ENCODE measurements at regions of chr5 and their contacts with region 1.

Region 1: DNA sequence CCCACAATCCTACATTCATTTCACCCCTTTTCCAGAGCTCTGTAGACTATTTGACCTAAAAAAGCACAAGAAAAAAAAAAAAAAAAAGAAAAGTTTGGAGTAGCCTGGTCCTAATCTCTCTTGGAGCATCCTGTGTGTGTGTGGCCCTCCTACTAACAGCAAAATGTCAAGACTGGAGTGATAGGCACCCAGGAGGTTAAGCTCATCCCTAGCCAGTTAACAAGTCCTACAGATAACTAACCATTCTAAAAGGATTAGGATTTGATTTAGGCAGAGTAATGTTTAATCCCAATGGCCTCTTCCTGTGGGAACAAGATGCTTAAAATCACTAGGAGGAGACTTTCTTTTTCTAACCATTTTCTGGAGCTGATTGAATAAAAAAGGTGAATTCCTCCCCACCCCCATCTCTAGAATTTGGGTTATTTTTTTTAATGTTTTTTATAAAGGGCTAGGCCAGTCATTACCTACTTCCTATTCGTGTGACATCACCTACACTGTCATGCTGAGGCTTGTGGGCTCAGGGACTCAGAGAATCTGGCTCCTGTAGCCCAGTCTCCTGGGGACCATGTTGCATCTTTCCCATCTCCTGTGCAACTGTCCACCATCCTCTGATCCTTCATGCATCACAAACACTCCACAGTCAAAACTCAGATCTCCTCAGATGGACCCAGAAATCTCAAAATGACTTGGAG is 43.2 kb upstream of the NR3C1 start:
- DNase-seq: peak; percentile 37
- H3K4me3 ChIP-seq: no peak overlapping the region
- H3K27ac ChIP-seq: peak overlapping the region; percentile 38
- H3K4me1 ChIP-seq: peaks cover 17% of the 10 kb centered on the region
- H3K27me3 ChIP-seq: no peaks in the 10 kb centered on the region
- CTCF ChIP-seq: no peak

Region 2: DNA sequence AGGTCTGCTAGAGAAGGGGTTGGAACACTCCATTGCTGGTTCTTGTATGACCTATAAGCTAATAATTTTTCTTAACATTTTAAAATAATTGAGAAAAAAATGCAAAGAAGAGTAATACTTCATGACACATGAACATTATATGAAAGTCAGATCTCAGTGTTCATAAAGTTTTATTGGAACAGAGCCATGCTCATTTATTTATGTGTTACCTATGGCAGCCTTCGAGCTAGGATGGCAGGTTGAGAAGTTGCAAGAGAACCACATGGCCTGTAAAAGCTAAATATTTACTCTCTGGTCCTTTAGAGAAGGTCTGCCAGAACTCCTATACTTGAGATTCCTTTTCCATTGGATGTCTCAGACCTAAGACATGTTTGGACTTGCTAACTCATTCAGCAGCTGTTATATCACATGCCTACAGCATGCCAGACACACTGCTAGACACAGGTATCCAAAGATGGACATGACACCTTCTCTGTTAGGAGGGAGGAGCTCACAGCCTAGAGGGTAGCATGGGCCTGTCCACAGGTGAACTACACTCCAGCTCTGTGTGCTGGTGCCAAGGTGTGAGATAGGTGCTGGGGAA is 372.2 kb before region 1 on chr5:
- CTCF ChIA-PET with region 1: no interaction called
- POLR2A ChIA-PET with region 1: no interaction called
- intact Hi-C with region 1: no loop called
- DNase-seq: no peak
- H3K4me3 ChIP-seq: no peak overlapping the region
- H3K27ac ChIP-seq: no peak overlapping the region
- H3K4me1 ChIP-seq: no peaks in the 10 kb centered on the region
- H3K27me3 ChIP-seq: no peaks in the 10 kb centered on the region
- CTCF ChIP-seq: no peak

Region 3: DNA sequence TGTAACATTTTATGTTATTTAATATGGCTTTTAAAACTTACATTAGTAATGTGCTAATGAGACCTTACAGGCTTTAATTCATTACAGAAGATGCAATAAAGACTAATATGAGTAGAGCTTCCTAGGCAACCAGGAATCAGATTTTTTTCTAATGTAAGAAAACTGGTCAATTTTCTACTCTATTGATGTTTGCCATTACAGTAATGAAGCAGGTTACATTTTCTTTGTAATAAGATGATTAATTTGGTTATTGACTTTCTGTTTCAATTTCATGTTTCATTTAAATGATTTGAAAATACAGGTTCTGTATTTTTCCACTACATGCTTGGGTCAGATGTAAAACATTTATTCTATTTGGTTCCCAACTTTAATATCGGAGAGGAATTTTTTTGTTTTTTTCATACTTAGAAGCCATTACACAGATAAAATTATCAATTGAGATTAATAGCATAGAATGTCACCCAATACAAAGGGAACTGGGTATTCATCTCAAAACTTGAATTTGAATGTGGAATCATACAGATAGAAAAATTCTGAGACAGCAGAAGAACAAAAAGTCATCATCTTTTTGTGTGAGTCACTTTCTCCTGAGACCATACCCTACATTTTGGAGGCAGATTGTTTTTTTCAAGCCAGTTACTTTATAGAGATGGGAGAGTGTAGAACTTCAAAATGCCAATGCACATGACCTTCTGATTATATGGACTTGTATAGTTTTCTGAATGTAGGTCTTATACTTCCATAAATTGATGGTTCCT is 231.6 kb after region 1 on chr5:
- CTCF ChIA-PET with region 1: no interaction called
- POLR2A ChIA-PET with region 1: interaction called, 13 read pairs
- intact Hi-C with region 1: no loop called
- DNase-seq: no peak
- H3K4me3 ChIP-seq: no peak overlapping the region
- H3K27ac ChIP-seq: no peak overlapping the region
- H3K4me1 ChIP-seq: no peaks in the 10 kb centered on the region
- H3K27me3 ChIP-seq: peaks cover 11% of the 10 kb centered on the region
- CTCF ChIP-seq: no peak

Region 4: DNA sequence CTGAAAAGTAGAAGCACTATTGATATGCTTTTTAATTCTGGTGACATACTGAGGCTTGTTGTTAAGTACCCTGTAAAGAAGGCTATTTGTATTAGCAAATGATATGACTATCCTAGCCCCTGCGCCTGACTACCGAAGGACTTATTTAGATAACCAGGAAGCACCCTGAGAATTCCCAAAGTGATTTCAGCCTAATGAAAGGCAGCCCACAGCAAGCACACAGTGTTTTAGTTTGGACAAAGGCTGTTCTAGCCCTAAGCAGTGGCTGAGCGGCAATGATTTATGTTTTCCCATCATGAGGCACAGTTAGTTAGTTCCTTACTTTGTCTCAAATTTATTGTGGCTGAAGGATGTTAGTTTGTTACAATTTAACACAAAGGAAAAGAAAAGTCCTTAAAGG is 959.3 kb after region 1 on chr5:
- CTCF ChIA-PET with region 1: no interaction called
- POLR2A ChIA-PET with region 1: no interaction called
- intact Hi-C with region 1: no loop called
- DNase-seq: no peak
- H3K4me3 ChIP-seq: no peak overlapping the region
- H3K27ac ChIP-seq: no peak overlapping the region
- H3K4me1 ChIP-seq: no peaks in the 10 kb centered on the region
- H3K27me3 ChIP-seq: no peaks in the 10 kb centered on the region
- CTCF ChIP-seq: no peak

Measured in A673 (cell line).